ENCODE measurements at regions of chr2 and their contacts with region 1.

Region 1: DNA sequence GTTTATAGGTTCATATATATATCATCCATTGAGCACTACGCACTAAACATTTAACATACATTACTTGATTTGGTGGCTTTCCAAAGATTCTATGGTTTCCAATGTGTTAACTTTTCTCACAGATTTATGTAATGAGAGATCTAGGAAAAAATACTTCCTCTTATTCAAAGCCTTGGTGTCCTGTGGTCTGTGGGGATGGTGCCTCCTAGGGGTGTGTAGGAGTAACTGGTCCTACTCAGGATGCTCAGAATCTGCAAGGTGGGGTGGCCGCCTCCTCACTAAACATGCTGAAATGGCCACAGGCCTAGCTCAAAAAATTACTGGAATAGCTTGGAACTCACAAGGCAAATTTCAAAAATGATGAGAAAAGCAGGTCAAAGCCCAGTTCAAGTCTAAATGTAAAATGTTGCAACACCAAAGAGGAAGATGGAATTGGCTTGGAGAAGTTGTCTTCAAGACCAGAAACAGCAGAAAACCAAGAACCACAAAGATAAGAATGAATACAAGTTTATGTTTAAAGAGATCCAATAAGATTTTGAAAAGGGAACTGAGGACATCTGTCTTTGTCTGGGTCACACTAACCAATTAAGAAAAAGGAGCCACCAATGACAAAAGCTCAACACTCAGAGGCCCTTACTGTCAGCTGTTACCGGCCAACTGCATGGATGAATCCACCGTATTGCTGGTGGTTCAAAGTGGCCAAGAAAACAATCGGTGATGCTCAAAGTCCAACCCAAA is 11.5 kb downstream of the GPR55 start:
- DNase-seq: peak; percentile 76
- H3K4me3 ChIP-seq: no peak overlapping the region
- H3K27ac ChIP-seq: no peak overlapping the region
- H3K4me1 ChIP-seq: peaks cover 0 to 13% (median 2%) of the 10 kb centered on the region in 4 donors
- H3K27me3 ChIP-seq: peaks cover 8% of the 10 kb centered on the region
- CTCF ChIP-seq: peak; percentile 63 to 87 (median 72)
- EP300 ChIP-seq: no peak
- POLR2A ChIP-seq: no peak

Region 2: GRCh38 chr2:230830428-230830827 is 83.1 kb before region 1 on chr2:
- in situ Hi-C with region 1: loop called in 1 of 4 experiments (anchors 10 kb)
- intact Hi-C with region 1: no loop called
- DNase-seq: no peak
- H3K4me3 ChIP-seq: no peak overlapping the region
- H3K27ac ChIP-seq: no peak overlapping the region
- H3K4me1 ChIP-seq: peaks cover 0 to 9% (median 8%) of the 10 kb centered on the region in 4 donors
- H3K27me3 ChIP-seq: peaks cover 35% of the 10 kb centered on the region
- CTCF ChIP-seq: no peak
- EP300 ChIP-seq: no peak
- POLR2A ChIP-seq: no peak

Region 3: DNA sequence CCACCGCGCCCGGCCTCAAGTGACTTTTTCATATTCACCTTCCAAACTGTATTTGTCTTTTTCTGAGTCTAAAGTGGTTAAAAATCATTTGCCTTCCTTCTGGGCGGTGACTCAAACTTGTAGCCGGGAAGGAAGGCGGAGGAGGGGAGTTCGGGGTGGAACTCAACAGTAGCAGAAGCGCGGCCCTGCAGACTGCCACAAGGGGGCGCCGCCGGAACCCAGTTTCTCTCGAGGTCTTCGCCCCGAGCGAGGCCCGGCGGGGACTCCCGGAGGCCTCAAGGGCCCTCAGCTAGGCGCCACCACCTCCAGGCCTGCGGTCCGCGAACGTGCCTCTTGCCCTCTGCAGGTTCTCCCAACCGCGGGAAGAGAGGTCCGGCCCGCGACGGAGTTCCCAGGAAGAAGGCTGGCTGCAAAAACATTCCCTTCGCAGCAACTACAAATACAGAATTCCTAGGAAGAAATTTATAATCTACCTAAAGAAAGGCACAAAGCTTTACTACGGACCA is 65.6 kb before region 1 on chr2:
- in situ Hi-C with region 1: loop called in 2 of 4 experiments (anchors 10 kb)
- intact Hi-C with region 1: no loop called
- DNase-seq: peak; percentile 95
- H3K4me3 ChIP-seq: peak overlapping the region in 1 of 4 donors; percentile 8
- H3K27ac ChIP-seq: peak overlapping the region in 1 of 4 donors; percentile 28
- H3K4me1 ChIP-seq: peaks cover 0 to 12% (median 7%) of the 10 kb centered on the region in 4 donors
- H3K27me3 ChIP-seq: peaks cover 7% of the 10 kb centered on the region
- CTCF ChIP-seq: peak; percentile 89 to 94 (median 91)
- EP300 ChIP-seq: no peak
- POLR2A ChIP-seq: no peak

Region 4: GRCh38 chr2:230864598-230865306 is 48.8 kb before region 1 on chr2 and contains the start of gene ITM2C:
- in situ Hi-C with region 1: loop called in 2 of 4 experiments (anchors 5 to 10 kb)
- intact Hi-C with region 1: no loop called
- DNase-seq: peak; percentile 89
- H3K4me3 ChIP-seq: peak within 1 kb of the TSS; percentile 84 to 96 (median 90)
- H3K27ac ChIP-seq: peak within 1 kb of the TSS; percentile 93 to 96 (median 95)
- H3K4me1 ChIP-seq: peaks cover 15 to 44% (median 38%) of the 10 kb centered on the region in 4 donors
- H3K27me3 ChIP-seq: no peaks in the 10 kb centered on the region
- CTCF ChIP-seq: peak in 4 of 5 experiments; percentile 25 to 42 (median 34)
- EP300 ChIP-seq: no peak
- POLR2A ChIP-seq: peak; percentile 95
- total RNA-seq, gene ITM2C: 911 to 2,535 (median 1,776) TPM

Region 5: DNA sequence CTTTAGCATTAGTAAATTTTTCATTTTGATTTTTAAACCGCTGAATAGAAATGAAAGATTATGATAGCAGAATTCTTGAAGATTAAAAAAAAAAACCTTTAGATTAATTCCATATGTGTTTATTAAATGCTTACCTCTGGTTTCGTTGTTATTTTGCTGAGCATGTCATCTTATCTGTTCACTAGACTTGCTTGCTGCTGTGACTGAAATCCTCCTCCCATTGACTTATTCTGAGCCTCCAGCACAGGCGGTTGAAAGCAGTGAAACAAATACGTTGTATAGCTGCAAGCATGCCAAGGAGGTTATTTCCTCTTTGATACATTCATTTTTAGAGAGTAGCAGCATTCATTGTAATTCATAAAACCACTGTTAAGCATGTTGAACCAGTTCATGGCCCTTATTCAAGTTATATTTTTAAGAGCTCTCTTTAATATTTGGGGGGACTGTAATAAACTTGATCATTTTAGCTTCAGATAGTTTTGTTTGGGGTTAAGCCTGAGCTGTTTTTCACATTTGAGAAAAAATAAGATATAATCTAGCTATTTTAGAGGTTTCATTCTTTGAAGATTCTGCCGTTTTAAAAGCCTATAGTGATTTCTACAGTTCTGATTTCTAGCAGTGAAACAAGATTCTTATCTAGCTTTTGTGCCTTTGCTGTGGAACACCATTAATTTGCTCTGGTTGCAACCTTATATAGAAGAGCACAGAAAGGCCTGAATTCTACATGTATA is 211.4 kb after region 1 on chr2 and contains the start of gene HTR2B:
- in situ Hi-C with region 1: no loop called
- intact Hi-C with region 1: no loop called
- DNase-seq: no peak
- H3K4me3 ChIP-seq: no peak within 1 kb of the TSS
- H3K27ac ChIP-seq: peak within 1 kb of the TSS; percentile 3 to 75 (median 41)
- H3K4me1 ChIP-seq: peaks cover 0 to 11% (median 2%) of the 10 kb centered on the region in 4 donors
- H3K27me3 ChIP-seq: no peaks in the 10 kb centered on the region
- CTCF ChIP-seq: no peak
- EP300 ChIP-seq: no peak
- POLR2A ChIP-seq: no peak
- total RNA-seq, gene HTR2B: 0.40 to 6.2 (median 0.82) TPM in 3 of 4 donors, not detected in the other

Measured in transverse colon (tissue), 4 donors.